ENCODE measurements at regions of chr6 and their contacts with region 1.

Region 1: GRCh38 chr6:109705258-109705657 is 14.2 kb downstream of the FIG4 start:
- DNase-seq: peak; percentile 85 to 92
- ATAC-seq: peak; percentile 97
- H3K4me3 ChIP-seq: no peak overlapping the region
- H3K27ac ChIP-seq: no peak overlapping the region
- H3K4me1 ChIP-seq: peaks cover 0 to 2% of the 10 kb centered on the region in 2 donors
- H3K27me3 ChIP-seq: no peaks in the 10 kb centered on the region

Region 2: GRCh38 chr6:109760208-109760607 is 55.0 kb after region 1 on chr6:
- intact Hi-C with region 1: no loop called
- DNase-seq: no peak
- ATAC-seq: no peak
- H3K4me3 ChIP-seq: no peak overlapping the region
- H3K27ac ChIP-seq: no peak overlapping the region
- H3K4me1 ChIP-seq: peaks cover 0 to 1% of the 10 kb centered on the region in 2 donors
- H3K27me3 ChIP-seq: no peaks in the 10 kb centered on the region

Region 3: GRCh38 chr6:109793793-109794192 is 88.5 kb after region 1 on chr6:
- intact Hi-C with region 1: loop called in 1 of 2 experiments (anchors 10 kb)
- DNase-seq: no peak
- ATAC-seq: peak; percentile 86
- H3K4me3 ChIP-seq: no peak overlapping the region
- H3K27ac ChIP-seq: no peak overlapping the region
- H3K4me1 ChIP-seq: no peaks in the 10 kb centered on the region
- H3K27me3 ChIP-seq: no peaks in the 10 kb centered on the region

Region 4: DNA sequence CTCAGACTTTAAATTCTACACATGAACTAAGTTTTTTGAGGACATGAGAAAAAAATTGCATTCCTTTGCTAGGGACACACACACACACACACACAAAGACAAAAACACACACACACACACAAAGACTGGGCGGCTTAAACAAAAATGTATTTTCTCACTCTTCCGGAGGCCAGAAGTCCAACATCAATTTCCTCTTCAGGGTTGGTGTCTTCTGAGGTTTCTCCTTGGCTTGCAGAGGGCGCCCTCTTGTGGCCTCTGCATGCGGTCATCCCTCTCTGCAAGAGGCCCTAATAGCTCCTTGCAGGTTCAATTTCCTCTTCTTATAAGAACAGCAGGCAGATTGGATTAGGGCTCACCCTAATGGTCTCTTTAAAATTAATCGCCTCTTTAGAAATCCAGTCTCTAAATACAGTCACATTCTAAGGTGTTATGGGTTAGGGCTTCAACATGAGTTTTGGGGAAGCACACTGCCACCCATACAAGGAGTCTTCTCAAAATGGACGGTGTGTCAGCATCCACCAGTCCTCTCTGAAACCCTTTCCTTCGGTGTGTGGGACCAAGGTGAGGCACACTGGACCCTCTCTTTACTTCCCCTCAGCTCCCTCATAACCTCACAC is 334.2 kb after region 1 on chr6:
- intact Hi-C with region 1: loop called (anchors 1 kb)
- DNase-seq: peak; percentile 91 to 92
- ATAC-seq: peak; percentile 90
- H3K4me3 ChIP-seq: no peak overlapping the region
- H3K27ac ChIP-seq: no peak overlapping the region
- H3K4me1 ChIP-seq: no peaks in the 10 kb centered on the region
- H3K27me3 ChIP-seq: no peaks in the 10 kb centered on the region

Region 5: DNA sequence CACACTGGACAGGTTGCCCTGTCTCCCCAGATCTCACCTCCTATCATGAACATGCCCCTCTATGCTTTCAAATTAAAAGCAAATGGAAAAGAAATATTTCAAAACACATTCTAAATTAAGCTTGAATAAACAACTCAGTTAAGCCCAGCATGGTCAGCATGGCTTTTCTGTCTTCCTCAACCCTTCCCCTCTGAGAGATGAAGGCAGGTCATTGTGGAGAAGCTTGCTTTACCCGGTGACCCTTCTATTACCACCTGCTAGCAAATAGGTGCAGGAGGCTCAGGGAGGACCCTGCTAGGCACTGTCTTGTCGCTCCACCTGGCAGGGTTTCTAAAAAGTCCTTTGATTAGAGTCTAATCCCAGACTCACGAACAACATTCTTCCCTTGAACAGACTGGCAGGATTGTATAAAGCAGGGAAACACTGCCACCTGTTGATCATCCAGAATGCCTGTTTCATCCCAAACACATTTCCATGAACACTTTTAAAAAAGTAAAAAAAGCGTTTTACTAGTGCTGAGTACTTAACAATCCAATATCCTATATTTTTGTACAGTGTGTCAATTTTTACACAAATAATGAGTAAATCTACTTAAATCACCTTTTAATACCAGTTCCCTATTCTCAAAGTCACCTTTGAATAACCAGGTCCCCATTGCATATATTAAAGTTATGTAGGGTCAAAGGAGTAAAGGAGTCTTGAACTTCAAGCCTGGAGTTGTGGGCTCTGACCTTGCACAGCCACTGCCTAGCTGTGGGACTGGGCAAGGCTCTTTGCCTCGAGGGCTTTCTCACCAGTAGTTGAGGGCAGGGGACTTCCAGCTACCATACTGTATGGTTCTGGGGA is 348.4 kb after region 1 on chr6:
- intact Hi-C with region 1: loop called in 1 of 2 experiments (anchors 5 kb)
- DNase-seq: no peak
- ATAC-seq: peak; percentile 63
- H3K4me3 ChIP-seq: no peak overlapping the region
- H3K27ac ChIP-seq: no peak overlapping the region
- H3K4me1 ChIP-seq: no peaks in the 10 kb centered on the region
- H3K27me3 ChIP-seq: peaks cover 0 to 4% of the 10 kb centered on the region in 2 donors

Region 6: GRCh38 chr6:110398778-110399177 is 693.5 kb after region 1 on chr6:
- intact Hi-C with region 1: loop called in 1 of 2 experiments (anchors 10 kb)
- DNase-seq: no peak
- ATAC-seq: peak; percentile 16
- H3K4me3 ChIP-seq: no peak overlapping the region
- H3K27ac ChIP-seq: no peak overlapping the region
- H3K4me1 ChIP-seq: no peaks in the 10 kb centered on the region
- H3K27me3 ChIP-seq: no peaks in the 10 kb centered on the region

Region 7: GRCh38 chr6:110958329-110959192 is 1253.3 kb after region 1 on chr6 and contains the start of gene GTF3C6:
- intact Hi-C with region 1: no loop called
- DNase-seq: peak; percentile 96 to 97
- ATAC-seq: peak; percentile 99
- H3K4me3 ChIP-seq: peak within 1 kb of the TSS; percentile 51 to 73
- H3K27ac ChIP-seq: peak within 1 kb of the TSS; percentile 36 to 76
- H3K4me1 ChIP-seq: no peaks in the 10 kb centered on the region
- H3K27me3 ChIP-seq: no peaks in the 10 kb centered on the region
- total RNA-seq, gene GTF3C6: 43.0 to 46.6 TPM

Measured in aorta (tissue), 5 donors.